T-cell (primary cell): ENCODE measurements at regions of chr18 and their contacts with region 1.

Region 1: DNA sequence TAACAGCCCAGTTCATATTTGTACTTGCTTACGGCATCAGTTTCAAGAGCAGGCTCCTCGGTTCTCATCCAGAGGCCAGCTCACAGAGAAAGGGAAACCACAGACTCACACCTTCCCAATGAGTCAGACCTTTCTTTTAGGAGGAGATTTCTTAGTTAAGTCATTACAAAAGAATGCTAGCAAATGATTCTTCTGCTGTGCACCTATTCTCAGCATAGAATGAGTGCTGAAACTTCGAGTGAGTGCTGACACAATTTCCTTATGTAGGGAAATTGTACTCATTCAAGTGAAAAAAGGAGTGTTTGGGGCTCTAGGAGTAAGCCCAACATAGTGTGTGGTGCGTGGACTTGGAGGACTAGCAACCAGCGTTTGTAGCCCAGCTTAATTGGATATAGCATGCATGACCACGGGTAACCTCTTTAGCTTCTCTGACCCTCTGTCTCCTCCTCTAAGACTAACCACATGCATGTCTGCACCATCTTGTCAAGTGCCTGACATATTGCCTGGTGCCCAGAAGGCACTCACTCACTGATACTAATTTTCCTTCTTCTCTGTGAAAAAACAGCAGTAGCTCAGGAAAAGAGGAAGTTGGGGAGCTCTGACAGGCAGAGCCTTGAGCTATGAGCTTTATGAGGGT is 87.0 kb downstream of the ALPK2 start:
- DNase-seq: peak in 14 of 35 experiments; percentile 5 to 67 (median 16)
- ATAC-seq: peak; percentile 79 to 83 (median 80)
- H3K4me3 ChIP-seq: no peak overlapping the region
- H3K4me3 Mint-ChIP-seq: no peak overlapping the region
- H3K27ac ChIP-seq: no peak overlapping the region
- H3K27ac Mint-ChIP-seq: peak overlapping the region; percentile 64 to 71
- H3K4me1 ChIP-seq: peaks cover 2 to 14% of the 10 kb centered on the region in 2 experiments
- H3K4me1 Mint-ChIP-seq: peaks cover 27 to 47% (median 33%) of the 10 kb centered on the region in 3 donors
- H3K27me3 ChIP-seq: peaks cover 0 to 3% of the 10 kb centered on the region in 2 experiments
- H3K27me3 Mint-ChIP-seq: no peaks in the 10 kb centered on the region

Region 2: DNA sequence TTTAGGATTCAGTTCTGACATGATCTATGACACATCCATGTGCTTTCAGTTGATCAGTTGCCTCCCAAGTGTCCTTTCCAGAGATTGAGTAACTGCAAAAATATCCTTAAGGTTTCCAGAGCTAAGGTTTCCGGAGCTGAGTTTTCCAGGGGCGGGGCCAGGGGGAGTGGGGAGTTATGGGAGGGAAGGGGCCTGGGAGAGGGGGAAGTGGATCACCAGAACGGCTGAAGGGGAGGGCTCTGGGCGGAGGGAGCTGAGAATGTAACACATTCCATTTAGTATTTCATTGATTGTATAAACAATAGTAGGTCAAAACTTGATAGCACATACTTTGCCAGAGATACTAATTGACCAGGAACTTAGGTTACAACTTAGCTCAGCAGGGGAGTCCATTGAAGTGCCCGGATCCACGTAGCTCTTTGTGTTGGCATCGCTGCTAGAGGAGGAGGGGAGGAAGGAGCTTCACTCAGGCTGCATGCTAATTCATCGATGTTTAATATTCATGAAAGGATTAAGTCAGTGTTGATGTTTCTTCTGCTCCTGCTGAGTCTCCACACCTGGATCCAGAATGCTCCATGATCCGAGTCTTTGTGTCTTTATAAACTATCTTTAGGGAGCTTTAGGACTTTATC is 202.8 kb before region 1 on chr18:
- CTCF ChIA-PET with region 1: no interaction called
- POLR2A ChIA-PET with region 1: no interaction called
- DNase-seq: no peak
- ATAC-seq: no peak
- H3K4me3 ChIP-seq: no peak overlapping the region
- H3K4me3 Mint-ChIP-seq: no peak overlapping the region
- H3K27ac ChIP-seq: no peak overlapping the region
- H3K27ac Mint-ChIP-seq: no peak overlapping the region
- H3K4me1 ChIP-seq: peaks cover 0 to 2% of the 10 kb centered on the region in 2 experiments
- H3K4me1 Mint-ChIP-seq: no peaks in the 10 kb centered on the region
- H3K27me3 ChIP-seq: no peaks in the 10 kb centered on the region
- H3K27me3 Mint-ChIP-seq: no peaks in the 10 kb centered on the region

Region 3: GRCh38 chr18:58520969-58521368 is 20.9 kb before region 1 on chr18:
- CTCF ChIA-PET with region 1: no interaction called
- POLR2A ChIA-PET with region 1: interaction called in 1 of 2 experiments, 16 read pairs
- DNase-seq: no peak
- ATAC-seq: no peak
- H3K4me3 ChIP-seq: no peak overlapping the region
- H3K4me3 Mint-ChIP-seq: no peak overlapping the region
- H3K27ac ChIP-seq: no peak overlapping the region
- H3K27ac Mint-ChIP-seq: no peak overlapping the region
- H3K4me1 ChIP-seq: no peaks in the 10 kb centered on the region
- H3K4me1 Mint-ChIP-seq: no peaks in the 10 kb centered on the region
- H3K27me3 ChIP-seq: peaks cover 0 to 5% of the 10 kb centered on the region in 2 experiments
- H3K27me3 Mint-ChIP-seq: peaks cover 10 to 16% of the 10 kb centered on the region in 2 donors

Region 4: GRCh38 chr18:58554404-58554803 is 12.5 kb after region 1 on chr18:
- CTCF ChIA-PET with region 1: interaction called in 1 of 2 experiments, 10 read pairs
- POLR2A ChIA-PET with region 1: no interaction called
- DNase-seq: no peak
- ATAC-seq: no peak
- H3K4me3 ChIP-seq: no peak overlapping the region
- H3K4me3 Mint-ChIP-seq: no peak overlapping the region
- H3K27ac ChIP-seq: no peak overlapping the region
- H3K27ac Mint-ChIP-seq: no peak overlapping the region
- H3K4me1 ChIP-seq: no peaks in the 10 kb centered on the region
- H3K4me1 Mint-ChIP-seq: peaks cover 0 to 8% (median 0%) of the 10 kb centered on the region in 3 donors
- H3K27me3 ChIP-seq: no peaks in the 10 kb centered on the region
- H3K27me3 Mint-ChIP-seq: peaks cover 0 to 7% of the 10 kb centered on the region in 2 donors

Region 5: DNA sequence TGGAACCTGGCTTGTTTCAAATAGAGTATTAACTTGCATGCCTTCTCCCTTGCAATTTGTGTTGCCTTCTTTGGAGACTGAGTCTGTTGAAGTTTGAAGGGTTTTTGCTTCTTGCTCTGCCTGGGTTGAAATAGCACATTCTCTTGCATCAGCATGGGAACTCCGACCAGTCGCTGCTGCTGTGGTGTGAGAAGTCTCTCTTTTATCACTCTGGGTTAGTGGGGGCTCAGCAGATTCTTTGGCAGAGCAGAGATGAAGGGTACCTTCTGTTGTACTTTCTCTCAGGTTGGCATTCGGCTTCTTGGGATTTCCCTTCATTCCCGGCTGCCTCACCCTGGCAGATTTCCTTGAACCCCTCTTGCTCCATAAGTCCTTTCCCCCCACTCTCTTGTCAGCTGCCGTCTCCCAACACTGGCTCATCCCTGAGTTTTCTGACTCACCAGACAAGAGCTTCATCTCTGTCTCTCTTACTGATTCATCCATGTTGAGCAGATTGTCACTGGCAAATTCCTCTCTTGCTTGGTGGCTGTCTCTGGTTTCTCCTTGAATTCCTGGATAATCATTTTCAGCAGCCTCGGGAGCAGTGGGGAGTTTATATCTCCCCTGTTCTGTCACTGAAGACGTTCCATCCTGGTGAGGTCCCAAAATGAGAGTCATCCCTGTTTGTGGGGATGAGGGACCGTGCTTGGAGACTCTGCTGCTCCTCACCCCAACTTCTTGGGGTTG is 37.1 kb after region 1 on chr18:
- CTCF ChIA-PET with region 1: no interaction called
- POLR2A ChIA-PET with region 1: no interaction called
- DNase-seq: no peak
- ATAC-seq: no peak
- H3K4me3 ChIP-seq: no peak overlapping the region
- H3K4me3 Mint-ChIP-seq: peak overlapping the region in 1 of 3 donors; percentile 35
- H3K27ac ChIP-seq: no peak overlapping the region
- H3K27ac Mint-ChIP-seq: no peak overlapping the region
- H3K4me1 ChIP-seq: peaks cover 0 to 10% of the 10 kb centered on the region in 2 experiments
- H3K4me1 Mint-ChIP-seq: peaks cover 14 to 33% (median 26%) of the 10 kb centered on the region in 3 donors
- H3K27me3 ChIP-seq: peaks cover 0 to 6% of the 10 kb centered on the region in 2 experiments
- H3K27me3 Mint-ChIP-seq: peaks cover 0 to 3% of the 10 kb centered on the region in 2 donors

Region 6: GRCh38 chr18:58730618-58731017 is 188.7 kb after region 1 on chr18:
- CTCF ChIA-PET with region 1: no interaction called
- POLR2A ChIA-PET with region 1: no interaction called
- DNase-seq: no peak
- ATAC-seq: no peak
- H3K4me3 ChIP-seq: no peak overlapping the region
- H3K4me3 Mint-ChIP-seq: no peak overlapping the region
- H3K27ac ChIP-seq: no peak overlapping the region
- H3K27ac Mint-ChIP-seq: no peak overlapping the region
- H3K4me1 ChIP-seq: no peaks in the 10 kb centered on the region
- H3K4me1 Mint-ChIP-seq: peaks cover 4 to 12% (median 6%) of the 10 kb centered on the region in 3 donors
- H3K27me3 ChIP-seq: no peaks in the 10 kb centered on the region
- H3K27me3 Mint-ChIP-seq: no peaks in the 10 kb centered on the region